ENCODE measurements at regions of chr3 and their contacts with region 1.

Region 1: GRCh38 chr3:192816351-192816750 is 89.0 kb upstream of the FGF12 start:
- DNase-seq: peak; percentile 47
- H3K4me3 ChIP-seq: no peak overlapping the region
- H3K27ac ChIP-seq: no peak overlapping the region
- H3K4me1 ChIP-seq: peaks cover 30% of the 10 kb centered on the region
- H3K27me3 ChIP-seq: no peaks in the 10 kb centered on the region
- CTCF ChIP-seq: peak; percentile 49 to 63

Region 2: GRCh38 chr3:192851821-192852424 is 35.6 kb after region 1 on chr3:
- CTCF ChIA-PET with region 1: no interaction called
- dilution Hi-C with region 1: no loop called
- in situ Hi-C with region 1: no loop called
- intact Hi-C with region 1: loop called (anchors 5 kb)
- DNase-seq: peak; percentile 93
- H3K4me3 ChIP-seq: no peak overlapping the region
- H3K27ac ChIP-seq: peak overlapping the region; percentile 90
- H3K4me1 ChIP-seq: peaks cover 27% of the 10 kb centered on the region
- H3K27me3 ChIP-seq: no peaks in the 10 kb centered on the region
- CTCF ChIP-seq: no peak

Region 3: DNA sequence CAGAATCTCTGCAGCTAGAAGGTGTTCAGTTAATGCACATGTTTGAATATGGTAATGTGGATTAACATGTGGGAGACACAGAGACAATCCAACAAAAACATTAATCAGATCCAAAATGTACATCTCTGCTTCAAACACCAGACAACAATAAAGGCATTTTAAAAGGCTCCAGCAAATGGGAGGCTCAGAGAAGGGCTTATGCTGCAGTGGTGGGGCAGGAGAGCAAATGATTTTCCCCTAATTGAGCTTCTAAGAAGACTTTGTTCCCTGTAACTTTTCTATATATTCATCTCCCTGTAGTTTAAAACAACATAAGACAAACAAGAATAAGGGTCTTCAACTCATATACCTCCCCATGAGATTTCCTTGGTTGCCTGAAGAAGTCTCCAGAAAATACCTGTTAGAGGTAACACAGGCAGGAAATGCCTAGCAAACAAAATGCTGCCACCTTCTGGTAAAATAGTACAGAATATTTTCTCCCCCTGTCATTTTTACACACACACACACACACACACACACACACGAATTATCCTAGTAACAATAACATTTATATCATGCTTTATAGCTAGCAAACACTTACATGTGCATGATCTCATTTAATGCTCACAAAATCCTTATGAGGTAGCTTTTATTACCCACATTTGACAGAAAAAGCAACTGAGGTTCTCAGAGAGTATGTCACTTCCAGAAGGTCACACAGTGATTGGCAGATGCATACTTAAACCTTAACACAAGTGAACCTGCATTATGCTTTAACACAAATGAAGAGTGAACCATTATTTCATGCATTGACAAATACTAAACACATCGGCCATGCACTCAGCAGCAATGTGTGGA is 224.7 kb after region 1 on chr3:
- CTCF ChIA-PET with region 1: no interaction called
- dilution Hi-C with region 1: no loop called
- in situ Hi-C with region 1: loop called (anchors 5 kb)
- intact Hi-C with region 1: loop called (anchors 1 kb)
- DNase-seq: peak; percentile 56
- H3K4me3 ChIP-seq: no peak overlapping the region
- H3K27ac ChIP-seq: no peak overlapping the region
- H3K4me1 ChIP-seq: no peaks in the 10 kb centered on the region
- H3K27me3 ChIP-seq: no peaks in the 10 kb centered on the region
- CTCF ChIP-seq: peak; percentile 41 to 61

Region 4: GRCh38 chr3:193190146-193190786 is 373.9 kb after region 1 on chr3:
- CTCF ChIA-PET with region 1: no interaction called
- dilution Hi-C with region 1: no loop called
- in situ Hi-C with region 1: no loop called
- intact Hi-C with region 1: loop called (anchors 5 kb)
- DNase-seq: peak; percentile 21
- H3K4me3 ChIP-seq: no peak overlapping the region
- H3K27ac ChIP-seq: no peak overlapping the region
- H3K4me1 ChIP-seq: no peaks in the 10 kb centered on the region
- H3K27me3 ChIP-seq: no peaks in the 10 kb centered on the region
- CTCF ChIP-seq: peak; percentile 46 to 73

Region 5: GRCh38 chr3:193465992-193466608 is 649.7 kb after region 1 on chr3:
- CTCF ChIA-PET with region 1: no interaction called
- dilution Hi-C with region 1: no loop called
- in situ Hi-C with region 1: loop called in 1 of 2 experiments (anchors 25 kb)
- intact Hi-C with region 1: loop called (anchors 2 kb)
- DNase-seq: no peak
- H3K4me3 ChIP-seq: no peak overlapping the region
- H3K27ac ChIP-seq: no peak overlapping the region
- H3K4me1 ChIP-seq: no peaks in the 10 kb centered on the region
- H3K27me3 ChIP-seq: peaks cover 4% of the 10 kb centered on the region
- CTCF ChIP-seq: no peak

Measured in mammary epithelial cell (primary cell).